GM12878 (cell line): ENCODE measurements at regions of chr14 and their contacts with region 1.

Region 1: GRCh38 chr14:98138666-98139065 is 1133.3 kb downstream of the BCL11B start:
- DNase-seq: no peak
- ATAC-seq: peak; percentile 72
- H3K4me3 ChIP-seq: no peak overlapping the region
- H3K27ac ChIP-seq: no peak overlapping the region
- H3K4me1 ChIP-seq: no peaks in the 10 kb centered on the region; the same call in 1 of the 2 replicates
- H3K27me3 ChIP-seq: no peaks in the 10 kb centered on the region
- CTCF ChIP-seq: peak; percentile 35 to 51 (median 49)
- EP300 ChIP-seq: no peak
- POLR2A ChIP-seq: no peak
- RAD21 ChIP-seq: peak; percentile 88

Region 2: GRCh38 chr14:98154254-98154653 is 15.6 kb after region 1 on chr14:
- CTCF ChIA-PET with region 1: interaction called, 11 read pairs
- POLR2A ChIA-PET with region 1: no interaction called
- RAD21 ChIA-PET with region 1: interaction called, 11 read pairs
- SMC1A ChIA-PET with region 1: interaction called, 296 read pairs
- in situ Hi-C with region 1: no loop called
- intact Hi-C with region 1: no loop called
- DNase-seq: no peak
- ATAC-seq: no peak
- H3K4me3 ChIP-seq: no peak overlapping the region
- H3K27ac ChIP-seq: no peak overlapping the region
- H3K4me1 ChIP-seq: no peaks in the 10 kb centered on the region
- H3K27me3 ChIP-seq: no peaks in the 10 kb centered on the region
- CTCF ChIP-seq: no peak
- EP300 ChIP-seq: no peak
- POLR2A ChIP-seq: no peak
- RAD21 ChIP-seq: no peak

Region 3: DNA sequence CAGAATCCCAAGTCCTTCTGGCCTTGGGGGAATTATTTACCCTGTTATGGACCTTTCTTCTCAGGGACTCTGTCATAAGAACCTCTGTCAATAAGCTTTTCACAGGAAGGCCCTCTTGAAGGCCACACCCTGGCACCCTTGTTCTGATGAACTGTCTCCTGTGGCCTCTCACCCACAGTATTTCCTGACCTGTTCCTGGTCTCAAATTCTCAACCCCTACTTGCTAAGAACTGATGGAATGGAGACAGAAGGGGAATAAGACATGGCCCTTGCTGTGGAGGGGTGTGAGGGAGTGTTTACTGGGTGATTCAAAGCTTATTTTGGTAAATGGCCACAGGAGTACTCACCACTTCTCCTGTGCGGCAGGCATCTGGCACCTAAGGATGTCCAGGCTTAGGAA is 50.4 kb after region 1 on chr14:
- CTCF ChIA-PET with region 1: interaction called, 158 read pairs
- POLR2A ChIA-PET with region 1: interaction called, 10 read pairs
- RAD21 ChIA-PET with region 1: interaction called, 407 read pairs
- SMC1A ChIA-PET with region 1: interaction called, 461 read pairs
- in situ Hi-C with region 1: no loop called
- intact Hi-C with region 1: no loop called
- DNase-seq: no peak
- ATAC-seq: no peak
- H3K4me3 ChIP-seq: no peak overlapping the region
- H3K27ac ChIP-seq: no peak overlapping the region
- H3K4me1 ChIP-seq: no peaks in the 10 kb centered on the region
- H3K27me3 ChIP-seq: no peaks in the 10 kb centered on the region
- CTCF ChIP-seq: no peak
- EP300 ChIP-seq: no peak
- POLR2A ChIP-seq: no peak
- RAD21 ChIP-seq: no peak

Region 4: DNA sequence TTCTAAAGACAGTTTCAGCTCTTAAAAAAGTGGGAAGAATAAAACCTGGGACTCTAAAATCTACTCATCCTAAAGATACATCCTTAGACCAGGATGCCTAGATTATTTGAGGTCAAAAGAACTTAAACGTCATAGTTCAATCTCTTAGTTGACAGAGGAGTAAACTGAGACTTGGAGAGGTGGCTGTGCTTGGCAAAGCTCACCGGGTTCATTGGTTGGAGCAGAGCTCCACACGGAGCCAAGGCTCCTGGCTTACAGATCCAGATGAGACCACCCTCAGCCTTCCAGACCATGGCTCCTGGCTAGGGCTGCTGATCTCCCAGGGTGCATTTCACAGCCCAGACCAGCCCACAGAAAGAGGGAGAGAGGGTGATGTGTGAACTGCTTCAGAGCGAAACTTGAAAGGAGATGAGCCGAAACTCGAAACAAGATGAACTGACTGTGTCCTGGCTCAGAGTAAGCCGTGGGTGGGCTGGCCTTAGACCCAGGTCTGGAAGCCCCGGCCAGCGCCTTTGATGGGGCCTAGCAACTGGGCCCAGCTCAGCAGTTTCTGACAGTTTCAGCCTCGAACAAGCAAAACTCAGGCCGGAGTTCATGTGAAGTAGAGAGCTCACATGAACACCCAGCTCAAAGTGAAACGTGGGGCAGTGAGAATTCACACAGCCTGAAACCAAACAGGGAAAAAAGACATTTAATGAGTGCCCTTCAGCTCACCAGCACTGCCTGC is 88.5 kb after region 1 on chr14:
- CTCF ChIA-PET with region 1: interaction called, 9 read pairs
- POLR2A ChIA-PET with region 1: interaction called, 9 read pairs
- RAD21 ChIA-PET with region 1: interaction called, 79 read pairs
- SMC1A ChIA-PET with region 1: interaction called, 100 read pairs
- in situ Hi-C with region 1: no loop called
- intact Hi-C with region 1: no loop called
- DNase-seq: peak; percentile 51
- ATAC-seq: peak; percentile 95
- H3K4me3 ChIP-seq: no peak overlapping the region
- H3K27ac ChIP-seq: peak overlapping the region; percentile 75
- H3K4me1 ChIP-seq: peaks cover 5% of the 10 kb centered on the region
- H3K27me3 ChIP-seq: no peaks in the 10 kb centered on the region
- CTCF ChIP-seq: no peak
- EP300 ChIP-seq: peak in 1 of 2 experiments; percentile 54; a peak in 1 of 4 replicates
- POLR2A ChIP-seq: no peak
- RAD21 ChIP-seq: peak; percentile 13; the same call in 1 of the 2 replicates

Region 5: DNA sequence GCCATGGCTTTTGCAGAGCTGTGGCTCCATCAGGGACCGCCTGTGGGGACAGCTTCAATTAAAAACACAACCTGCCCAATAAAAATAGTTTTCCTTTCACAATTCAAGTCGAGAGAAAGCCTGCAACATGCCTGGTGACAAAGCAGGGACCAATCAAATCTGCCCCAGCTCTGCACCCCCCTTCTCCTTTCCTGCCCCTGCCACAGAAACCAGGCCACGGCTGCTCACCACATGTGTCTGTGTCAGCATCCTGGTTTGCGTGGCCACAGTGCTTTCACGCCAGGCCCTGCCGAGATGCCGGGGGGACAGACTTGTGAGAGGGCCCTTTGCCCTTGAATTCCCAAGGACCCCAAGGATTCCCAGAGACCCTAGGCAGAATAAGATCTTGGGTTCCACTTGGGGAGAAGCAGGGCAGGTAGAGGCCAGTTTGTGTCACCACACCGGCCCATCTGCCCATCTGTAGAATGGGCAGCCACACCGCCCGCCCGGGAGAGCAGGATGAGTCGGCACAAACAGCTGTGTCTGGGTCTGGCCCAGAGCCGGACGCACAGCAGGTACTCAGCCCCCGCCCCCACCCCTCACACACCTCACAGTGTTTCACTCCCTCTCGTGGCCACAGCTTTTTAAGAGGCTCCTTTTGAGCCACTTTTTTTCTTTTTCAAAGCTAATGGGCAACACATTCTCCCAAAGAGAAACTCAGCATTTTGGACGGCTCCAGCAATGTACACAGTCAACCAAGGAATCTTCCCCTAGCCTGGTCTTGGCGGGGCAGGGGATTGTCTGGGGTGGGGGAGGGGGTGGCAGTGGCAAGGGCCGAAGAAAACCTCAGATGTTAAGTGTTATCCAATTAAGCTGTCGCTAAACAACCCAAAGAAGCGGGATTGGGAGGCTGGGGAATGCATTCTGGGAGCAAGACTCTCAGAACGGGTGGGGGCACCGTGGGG is 1091.8 kb after region 1 on chr14:
- CTCF ChIA-PET with region 1: interaction called, 6 read pairs
- POLR2A ChIA-PET with region 1: no interaction called
- RAD21 ChIA-PET with region 1: interaction called, 10 read pairs
- SMC1A ChIA-PET with region 1: interaction called, 7 read pairs
- in situ Hi-C with region 1: no loop called
- intact Hi-C with region 1: no loop called
- DNase-seq: no peak
- ATAC-seq: peak; percentile 32; the same call in 2 of the 3 replicates
- H3K4me3 ChIP-seq: no peak overlapping the region
- H3K27ac ChIP-seq: no peak overlapping the region
- H3K4me1 ChIP-seq: no peaks in the 10 kb centered on the region; the same call in 1 of the 2 replicates
- H3K27me3 ChIP-seq: no peaks in the 10 kb centered on the region
- CTCF ChIP-seq: peak in 1 of 3 experiments; percentile 22; a peak in 1 of 6 replicates
- EP300 ChIP-seq: no peak
- POLR2A ChIP-seq: no peak
- RAD21 ChIP-seq: peak; percentile 50; the same call in 1 of the 2 replicates